Right cardiac atrium (tissue), 5 donors: ENCODE measurements at regions of chr1 and their contacts with region 1.

Region 1: GRCh38 chr1:109984456-109985275 is at the start of gene AHCYL1:
- DNase-seq: peak; percentile 100
- ATAC-seq: peak; percentile 97 to 98
- H3K4me3 ChIP-seq: peak within 1 kb of the TSS; percentile 66
- H3K27ac ChIP-seq: peak within 1 kb of the TSS; percentile 94
- H3K4me1 ChIP-seq: peaks cover 8% of the 10 kb centered on the region
- H3K27me3 ChIP-seq: no peaks in the 10 kb centered on the region
- total RNA-seq, gene AHCYL1: 37.4 to 49.6 (median 43.8) TPM

Region 2: DNA sequence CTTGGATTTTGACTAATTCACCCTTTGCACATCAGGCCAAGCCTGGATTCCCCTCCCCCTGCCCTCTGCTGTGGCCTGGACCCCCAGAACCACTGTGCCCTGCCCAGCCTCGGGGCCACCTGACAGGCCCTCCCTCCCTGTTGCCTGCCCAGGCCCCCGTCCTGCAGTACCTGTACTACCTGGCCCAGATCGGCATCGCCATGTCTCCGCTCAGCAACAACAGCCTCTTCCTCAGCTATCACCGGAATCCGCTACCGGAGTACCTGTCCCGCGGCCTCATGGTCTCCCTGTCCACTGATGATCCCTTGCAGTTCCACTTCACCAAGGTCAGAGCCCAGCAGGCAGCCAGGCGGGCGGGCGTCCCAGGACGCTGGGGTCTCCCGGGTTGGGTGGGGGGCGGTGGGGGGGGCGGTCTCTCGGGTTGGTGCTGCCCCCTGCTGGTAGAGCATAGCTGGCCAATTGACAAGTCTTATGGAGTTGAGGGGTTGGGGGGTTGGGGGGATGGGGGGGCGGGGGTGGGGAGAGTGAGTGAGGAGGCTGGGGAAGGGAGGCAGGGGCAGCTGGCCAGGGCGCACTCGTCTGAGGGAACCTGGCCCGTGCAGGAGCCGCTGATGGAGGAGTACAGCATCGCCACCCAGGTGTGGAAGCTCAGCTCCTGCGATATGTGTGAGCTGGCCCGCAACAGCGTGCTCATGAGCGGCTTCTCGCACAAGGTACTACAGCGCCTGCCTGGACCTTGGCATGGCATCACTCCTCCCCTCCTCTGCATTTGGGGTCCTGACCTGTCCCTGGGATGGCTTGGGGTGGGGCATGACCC is 354.4 kb before region 1 on chr1:
- intact Hi-C with region 1: loop called in 2 of 4 experiments (anchors 5 to 10 kb)
- DNase-seq: peak in 2 of 3 donors; percentile 58 to 62
- ATAC-seq: no peak
- H3K4me3 ChIP-seq: no peak overlapping the region
- H3K27ac ChIP-seq: no peak overlapping the region
- H3K4me1 ChIP-seq: no peaks in the 10 kb centered on the region
- H3K27me3 ChIP-seq: no peaks in the 10 kb centered on the region

Region 3: DNA sequence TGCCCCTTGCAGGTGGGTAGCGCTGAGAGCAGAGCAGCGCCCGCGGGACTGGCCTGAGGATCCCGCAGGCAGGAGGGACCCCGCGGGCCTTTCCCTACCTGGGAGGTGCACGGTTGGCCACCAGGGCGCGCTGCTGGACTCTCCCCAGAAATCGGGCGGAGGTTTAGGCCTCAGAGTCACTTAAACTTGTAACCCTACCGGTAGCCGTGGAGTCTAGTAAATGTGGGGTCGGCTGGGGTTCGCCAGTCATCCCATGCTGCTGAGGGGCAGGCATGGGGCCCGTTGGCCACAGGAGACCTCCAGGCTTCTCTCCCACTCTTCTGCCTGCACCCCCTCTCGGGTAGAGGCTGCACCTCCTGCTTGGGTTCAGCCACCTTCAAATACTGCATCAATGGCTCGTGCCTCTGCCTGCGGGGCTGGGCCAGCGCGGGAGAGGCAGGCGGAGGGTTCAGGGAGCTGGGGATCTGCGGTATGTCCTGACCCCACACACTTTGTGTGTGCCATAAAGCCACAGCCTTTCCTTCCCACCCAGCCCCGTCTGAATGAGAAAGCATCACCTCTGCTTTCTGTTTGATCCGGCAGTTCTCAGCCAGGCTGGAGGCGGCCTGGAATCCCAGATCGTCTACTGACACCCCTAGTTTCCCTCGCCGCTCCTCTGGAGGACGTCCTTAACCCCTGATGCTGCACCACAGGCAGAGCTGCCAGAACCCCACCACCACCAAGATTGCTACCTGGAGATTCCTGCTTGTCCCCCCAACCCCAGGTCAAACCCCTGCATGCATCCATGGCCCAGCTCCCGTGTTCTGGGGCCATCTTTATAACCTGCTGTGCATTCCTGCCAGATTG is 341.1 kb before region 1 on chr1:
- intact Hi-C with region 1: loop called (anchors 5 to 10 kb)
- DNase-seq: peak; percentile 81 to 93 (median 93)
- ATAC-seq: peak; percentile 82 to 88
- H3K4me3 ChIP-seq: no peak overlapping the region
- H3K27ac ChIP-seq: no peak overlapping the region
- H3K4me1 ChIP-seq: no peaks in the 10 kb centered on the region
- H3K27me3 ChIP-seq: no peaks in the 10 kb centered on the region

Region 4: DNA sequence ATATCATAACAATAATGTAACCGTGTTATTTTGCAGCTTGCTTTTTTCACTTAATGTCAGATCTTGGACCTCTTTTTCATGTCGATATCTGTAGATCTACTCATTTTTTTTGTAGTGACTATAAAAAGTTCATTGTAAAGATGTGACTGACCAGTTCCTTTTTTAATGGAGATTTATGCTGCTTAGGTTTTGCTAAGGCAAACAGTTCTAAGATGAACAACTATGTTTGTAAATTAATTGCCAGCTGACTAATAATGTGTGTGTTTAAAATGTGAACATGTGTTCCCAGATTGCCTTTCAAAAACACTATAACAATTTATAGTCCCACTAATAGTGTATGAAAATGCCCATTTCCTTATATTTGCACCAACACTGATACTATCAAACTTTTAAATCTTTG is 202.9 kb before region 1 on chr1:
- intact Hi-C with region 1: loop called (anchors 1 to 2 kb)
- DNase-seq: no peak
- ATAC-seq: no peak
- H3K4me3 ChIP-seq: no peak overlapping the region
- H3K27ac ChIP-seq: no peak overlapping the region
- H3K4me1 ChIP-seq: peaks cover 3% of the 10 kb centered on the region
- H3K27me3 ChIP-seq: no peaks in the 10 kb centered on the region

Region 5: DNA sequence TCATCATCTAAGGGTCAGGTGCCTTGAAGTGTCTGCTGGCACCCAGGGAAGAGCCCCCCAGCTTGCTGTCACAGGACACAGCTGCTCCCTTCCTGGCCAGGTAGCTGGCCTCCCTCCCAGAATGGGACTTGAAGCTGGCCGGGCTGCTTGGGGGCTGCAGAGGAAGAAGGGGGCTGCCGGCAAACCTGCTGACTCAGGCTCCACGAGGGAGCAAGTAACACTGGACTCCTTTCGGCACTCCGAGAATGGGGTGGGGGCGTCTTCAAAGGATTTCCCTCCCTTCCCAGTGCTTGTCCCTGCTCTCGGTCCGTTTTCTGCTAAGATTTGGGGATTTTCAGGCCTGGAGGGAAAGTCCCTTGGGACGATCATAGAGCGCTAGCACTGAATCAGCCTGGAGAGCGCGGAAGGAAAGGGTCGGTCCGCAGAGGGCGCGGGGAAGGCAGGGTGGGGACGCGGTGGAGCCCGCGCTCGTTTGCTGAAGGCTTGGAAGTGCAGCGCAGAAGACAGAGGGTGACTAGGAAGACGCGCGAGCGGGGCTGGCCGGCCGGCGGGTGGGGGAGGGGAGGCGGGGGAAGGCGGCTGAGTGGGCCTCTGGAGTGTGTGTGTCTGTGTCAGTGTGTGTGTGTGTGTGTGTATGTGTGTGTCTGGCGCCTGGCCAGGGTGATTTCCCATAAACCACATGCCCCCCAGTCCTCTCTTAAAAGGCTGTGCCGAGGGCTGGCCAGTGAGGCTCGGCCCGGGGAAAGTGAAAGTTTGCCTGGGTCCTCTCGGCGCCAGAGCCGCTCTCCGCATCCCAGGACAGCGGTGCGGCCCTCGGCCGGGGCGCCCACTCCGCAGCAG is 74.3 kb before region 1 on chr1 and contains the start of gene CSF1:
- intact Hi-C with region 1: loop called in 3 of 4 experiments (anchors 5 kb)
- DNase-seq: peak; percentile 82 to 93 (median 92)
- ATAC-seq: peak; percentile 82 to 84
- H3K4me3 ChIP-seq: peak within 1 kb of the TSS; percentile 86
- H3K27ac ChIP-seq: peak within 1 kb of the TSS; percentile 76
- H3K4me1 ChIP-seq: peaks cover 26% of the 10 kb centered on the region
- H3K27me3 ChIP-seq: no peaks in the 10 kb centered on the region
- total RNA-seq, gene CSF1: 13.9 to 22.6 (median 19.4) TPM